Caco-2 (cell line): ENCODE measurements at regions of chr19 and their contacts with region 1.

Region 1: DNA sequence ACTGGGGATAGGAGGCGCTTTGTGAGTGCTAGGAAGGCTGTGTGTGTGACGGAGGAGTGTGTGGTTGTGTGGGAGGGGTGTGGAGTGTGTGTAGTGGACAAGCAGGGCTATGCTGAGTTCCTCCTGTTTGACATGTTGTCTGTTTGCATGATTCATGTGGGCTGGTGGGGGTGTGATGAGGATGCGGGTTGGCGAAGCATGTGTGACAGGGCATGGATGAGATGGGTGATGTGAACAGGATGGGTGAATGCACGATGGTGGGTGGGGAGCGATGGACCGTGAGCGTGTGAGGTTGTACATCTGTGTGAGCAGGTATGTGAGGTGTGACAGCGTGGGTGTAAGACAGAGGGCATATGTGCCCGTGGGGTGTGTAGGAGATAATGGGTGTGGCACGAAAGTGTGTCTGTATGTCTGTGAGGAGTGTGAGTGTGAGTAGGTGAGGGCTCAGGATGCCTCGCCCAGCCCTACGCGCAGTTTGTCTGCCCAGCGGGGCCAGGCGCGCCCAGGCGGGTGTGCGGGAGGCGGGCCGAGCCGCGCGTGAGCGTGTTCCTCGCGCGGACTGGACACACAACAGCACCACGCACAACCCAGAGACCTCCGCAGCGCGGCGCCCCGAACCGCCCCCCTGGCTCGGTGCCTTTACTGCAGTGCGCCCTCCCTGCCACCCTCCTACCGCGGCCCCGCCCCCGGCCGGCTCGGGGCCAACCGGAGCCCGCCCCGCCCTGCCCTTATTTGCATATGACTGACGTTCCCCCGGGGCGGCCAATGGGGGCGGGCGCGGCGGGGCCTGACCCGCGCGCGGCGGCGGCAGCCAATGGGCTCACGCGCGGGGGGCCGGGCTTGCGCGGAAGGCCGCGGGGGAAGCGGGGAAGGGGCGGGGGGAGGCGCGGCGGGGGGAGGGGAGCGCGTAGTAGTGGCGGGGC is 14.4 kb downstream of the CIC start:
- DNase-seq: peak; percentile 95 to 98
- H3K4me3 ChIP-seq: peak overlapping the region; percentile 79
- H3K4me3 Mint-ChIP-seq: no peak overlapping the region
- H3K27ac Mint-ChIP-seq: no peak overlapping the region
- H3K4me1 ChIP-seq: peaks cover 40% of the 10 kb centered on the region
- H3K4me1 Mint-ChIP-seq: peaks cover 29% of the 10 kb centered on the region
- H3K27me3 ChIP-seq: no peaks in the 10 kb centered on the region
- H3K27me3 Mint-ChIP-seq: no peaks in the 10 kb centered on the region
- CTCF ChIP-seq: no peak

Region 2: DNA sequence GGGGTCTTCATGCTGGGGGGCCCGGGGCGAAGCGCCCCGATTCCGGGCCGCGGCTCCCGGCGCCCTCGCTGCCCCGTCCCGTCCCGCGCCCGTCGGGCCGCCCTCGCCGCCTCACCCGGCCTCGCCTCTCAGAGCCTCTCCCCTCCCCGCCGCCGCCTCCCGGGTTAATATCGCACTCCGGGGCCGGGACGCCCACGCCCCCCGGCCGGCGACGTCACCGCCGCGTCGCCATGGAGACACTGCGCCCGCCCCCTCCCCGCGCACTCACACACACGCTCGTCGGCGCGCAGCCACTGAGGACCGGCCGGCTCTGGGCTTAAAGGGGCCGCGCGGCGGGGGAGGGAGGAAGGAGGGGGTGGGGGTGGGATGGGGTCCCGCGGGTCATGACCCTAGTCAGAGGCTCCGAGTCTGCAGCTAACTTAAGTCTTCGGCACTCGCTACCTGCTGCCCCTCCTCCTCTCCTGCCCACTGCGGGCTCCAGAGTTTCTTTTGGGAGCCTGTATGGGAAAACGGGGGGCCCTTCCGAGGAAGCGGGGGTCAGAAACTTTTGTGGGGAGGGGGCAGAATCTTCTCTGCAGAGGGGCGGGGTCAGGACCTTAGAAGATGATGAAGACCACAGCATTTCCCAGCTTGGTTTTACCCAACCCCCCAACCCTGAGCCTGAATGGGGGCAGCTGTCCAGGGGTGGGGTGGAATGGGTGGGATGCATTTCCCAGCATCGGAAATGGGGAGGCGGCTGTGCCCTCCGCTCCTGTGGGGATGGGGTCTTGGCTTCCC is 28.2 kb before region 1 on chr19 and contains the start of gene ERF:
- CTCF ChIA-PET with region 1: interaction called, 4 read pairs
- POLR2A ChIA-PET with region 1: interaction called, 8 read pairs
- intact Hi-C with region 1: loop called (anchors 1 kb)
- DNase-seq: peak; percentile 93 to 97
- H3K4me3 ChIP-seq: peak within 1 kb of the TSS; percentile 74
- H3K4me3 Mint-ChIP-seq: peak within 1 kb of the TSS; percentile 87
- H3K27ac Mint-ChIP-seq: peak within 1 kb of the TSS; percentile 89
- H3K4me1 ChIP-seq: peaks cover 21% of the 10 kb centered on the region
- H3K4me1 Mint-ChIP-seq: peaks cover 21% of the 10 kb centered on the region
- H3K27me3 ChIP-seq: no peaks in the 10 kb centered on the region
- H3K27me3 Mint-ChIP-seq: no peaks in the 10 kb centered on the region
- CTCF ChIP-seq: no peak
- total RNA-seq, gene ERF: 134 and 149 TPM in 2 replicates